H1 (cell line): ENCODE measurements at regions of chr4 and their contacts with region 1.

Region 1: DNA sequence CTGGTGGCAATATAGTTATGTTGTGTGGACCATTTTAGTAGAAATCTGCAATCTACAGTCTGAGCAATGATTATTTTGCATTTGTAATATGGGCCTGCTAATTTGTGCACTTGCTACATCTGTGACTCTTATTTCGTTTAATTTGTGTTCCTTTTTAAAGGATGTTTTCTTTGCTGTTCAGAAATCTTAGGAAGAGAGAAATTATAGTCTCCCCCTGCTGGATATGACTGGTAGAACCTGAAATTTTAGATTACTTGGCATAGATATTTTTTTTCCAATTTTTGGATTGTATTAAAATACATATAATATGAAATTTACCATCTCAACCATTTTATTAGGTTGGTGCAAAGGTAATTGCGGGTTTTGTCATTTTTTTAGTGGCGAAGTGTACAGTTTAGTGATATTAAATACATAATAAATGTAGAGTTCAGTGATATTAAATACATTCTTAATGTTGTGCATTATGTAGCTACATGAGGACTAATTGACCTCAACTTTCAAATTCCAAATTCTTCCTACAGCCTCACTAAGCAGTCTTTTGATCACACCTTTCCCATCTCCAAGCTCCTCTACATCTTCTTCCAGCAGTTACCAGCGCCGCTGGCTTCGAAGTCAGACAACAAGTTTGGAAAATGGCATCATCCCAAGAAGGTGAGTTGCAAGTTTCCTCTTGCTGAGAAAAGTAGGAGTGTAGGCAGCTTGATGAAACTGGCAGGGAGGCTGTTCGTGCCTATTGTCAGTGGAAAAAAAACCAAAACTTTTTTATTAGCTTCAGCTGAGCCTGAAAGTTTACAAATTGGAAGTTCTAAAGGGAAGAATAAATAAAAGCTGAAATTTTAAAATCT is 82.2 kb downstream of the FNIP2 start:
- DNase-seq: no peak
- H3K4me3 ChIP-seq: no peak overlapping the region
- H3K27ac ChIP-seq: no peak overlapping the region
- H3K4me1 ChIP-seq: peaks cover 0 to 12% (median 8%) of the 10 kb centered on the region in 4 experiments; a peak in 6 of 7 replicates
- H3K27me3 ChIP-seq: no peaks in the 10 kb centered on the region
- CTCF ChIP-seq: peak in 2 of 3 experiments; percentile 33 to 39; a peak in 2 of 4 replicates
- EP300 ChIP-seq: no peak
- POLR2A ChIP-seq: no peak
- RAD21 ChIP-seq: peak; percentile 25 to 41

Region 2: DNA sequence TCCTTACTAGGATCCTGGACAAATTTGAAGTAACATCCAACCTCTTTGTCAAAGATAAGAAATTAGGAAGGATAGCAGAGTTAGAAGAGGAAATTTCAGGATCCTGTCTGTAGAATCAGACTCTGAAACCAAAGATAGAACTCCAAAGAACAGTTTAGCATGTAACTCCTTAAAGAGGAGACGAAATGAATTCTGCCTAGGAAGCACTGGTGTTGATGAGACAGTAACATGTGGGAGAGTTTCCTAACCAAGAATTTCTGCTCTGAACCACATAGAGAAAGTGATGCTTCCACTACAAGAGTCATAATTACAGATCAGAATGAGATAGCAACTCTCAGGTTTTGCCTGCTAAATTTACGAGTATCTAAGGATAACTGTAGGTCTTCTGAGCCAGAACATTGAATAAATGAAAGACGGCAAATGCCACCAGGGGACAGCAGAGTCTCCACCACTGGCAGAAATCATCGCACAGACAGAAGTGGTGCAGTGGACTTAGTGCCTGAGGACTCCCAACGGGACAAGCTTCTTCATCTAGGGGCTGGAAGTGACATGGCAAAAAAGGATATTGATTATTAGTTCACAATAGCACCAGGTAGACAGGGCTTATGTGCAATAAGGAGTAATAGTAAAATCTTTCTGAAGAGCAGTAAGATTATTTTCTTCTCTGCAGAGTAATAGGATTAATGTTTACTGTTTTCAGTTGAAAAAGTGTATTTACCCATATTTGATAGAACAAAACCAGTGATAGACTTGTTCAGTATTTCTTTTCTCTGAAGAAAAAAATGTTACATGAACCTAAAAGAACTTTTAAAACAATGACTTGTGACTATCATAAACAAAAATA is 121.1 kb before region 1 on chr4:
- CTCF ChIA-PET with region 1: interaction called, 11 read pairs
- POLR2A ChIA-PET with region 1: no interaction called
- DNase-seq: peak in 1 of 2 experiments; percentile 48
- H3K4me3 ChIP-seq: no peak overlapping the region
- H3K27ac ChIP-seq: no peak overlapping the region
- H3K4me1 ChIP-seq: no peaks in the 10 kb centered on the region
- H3K27me3 ChIP-seq: no peaks in the 10 kb centered on the region
- CTCF ChIP-seq: peak; percentile 66 to 83 (median 76)
- EP300 ChIP-seq: no peak
- POLR2A ChIP-seq: no peak
- RAD21 ChIP-seq: peak; percentile 88 to 89

Region 3: DNA sequence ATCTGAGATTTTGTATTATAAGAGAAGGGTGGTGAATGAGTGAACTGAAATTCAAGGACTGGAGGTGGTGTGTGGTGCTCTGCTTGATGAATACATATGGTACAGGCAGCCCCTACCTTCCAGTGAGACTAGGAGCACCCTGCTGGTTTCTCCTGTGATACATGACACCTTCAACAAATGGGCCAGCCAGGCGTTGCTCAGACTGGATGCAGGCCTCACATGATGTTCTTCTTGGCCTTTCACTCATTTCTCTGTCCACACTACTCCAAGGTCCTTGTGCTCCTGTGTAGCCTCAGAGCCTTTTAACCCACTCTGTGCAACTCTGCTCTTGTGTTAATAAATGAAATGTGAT is 15.0 kb before region 1 on chr4:
- CTCF ChIA-PET with region 1: interaction called, 91 read pairs
- POLR2A ChIA-PET with region 1: interaction called, 4 read pairs
- DNase-seq: no peak
- H3K4me3 ChIP-seq: no peak overlapping the region
- H3K27ac ChIP-seq: no peak overlapping the region
- H3K4me1 ChIP-seq: peaks cover 0 to 3% (median 1%) of the 10 kb centered on the region in 4 experiments; a peak in 2 of 7 replicates
- H3K27me3 ChIP-seq: no peaks in the 10 kb centered on the region
- CTCF ChIP-seq: no peak
- EP300 ChIP-seq: no peak
- POLR2A ChIP-seq: no peak
- RAD21 ChIP-seq: no peak

Region 4: GRCh38 chr4:158870626-158871334 is 19.8 kb after region 1 on chr4:
- CTCF ChIA-PET with region 1: interaction called, 19 read pairs
- POLR2A ChIA-PET with region 1: interaction called, 3 read pairs
- DNase-seq: peak; percentile 5 to 58
- H3K4me3 ChIP-seq: no peak overlapping the region
- H3K27ac ChIP-seq: no peak overlapping the region
- H3K4me1 ChIP-seq: peaks cover 0 to 10% (median 6%) of the 10 kb centered on the region in 4 experiments; a peak in 5 of 7 replicates
- H3K27me3 ChIP-seq: no peaks in the 10 kb centered on the region
- CTCF ChIP-seq: no peak
- EP300 ChIP-seq: no peak; a peak in 1 of 3 replicates
- POLR2A ChIP-seq: no peak
- RAD21 ChIP-seq: no peak

Region 5: GRCh38 chr4:158965226-158965625 is 114.2 kb after region 1 on chr4:
- CTCF ChIA-PET with region 1: no interaction called
- POLR2A ChIA-PET with region 1: no interaction called
- DNase-seq: no peak
- H3K4me3 ChIP-seq: no peak overlapping the region
- H3K27ac ChIP-seq: no peak overlapping the region
- H3K4me1 ChIP-seq: peaks cover 0 to 7% (median under 1%) of the 10 kb centered on the region in 4 experiments; a peak in 1 of 7 replicates
- H3K27me3 ChIP-seq: no peaks in the 10 kb centered on the region
- CTCF ChIP-seq: no peak
- EP300 ChIP-seq: no peak
- POLR2A ChIP-seq: no peak
- RAD21 ChIP-seq: no peak

Region 6: GRCh38 chr4:159206427-159206871 is 355.4 kb after region 1 on chr4:
- CTCF ChIA-PET with region 1: interaction called, 42 read pairs
- POLR2A ChIA-PET with region 1: no interaction called
- DNase-seq: no peak
- H3K4me3 ChIP-seq: no peak overlapping the region
- H3K27ac ChIP-seq: no peak overlapping the region
- H3K4me1 ChIP-seq: peaks cover 0 to 5% (median under 1%) of the 10 kb centered on the region in 4 experiments; a peak in 3 of 7 replicates
- H3K27me3 ChIP-seq: peaks cover 0 to 1% (median 0%) of the 10 kb centered on the region in 4 experiments; a peak in 1 of 7 replicates
- CTCF ChIP-seq: no peak
- EP300 ChIP-seq: no peak
- POLR2A ChIP-seq: no peak
- RAD21 ChIP-seq: no peak